Mammary epithelial cell (primary cell): ENCODE measurements at regions of chr10 and their contacts with region 1.

Region 1: DNA sequence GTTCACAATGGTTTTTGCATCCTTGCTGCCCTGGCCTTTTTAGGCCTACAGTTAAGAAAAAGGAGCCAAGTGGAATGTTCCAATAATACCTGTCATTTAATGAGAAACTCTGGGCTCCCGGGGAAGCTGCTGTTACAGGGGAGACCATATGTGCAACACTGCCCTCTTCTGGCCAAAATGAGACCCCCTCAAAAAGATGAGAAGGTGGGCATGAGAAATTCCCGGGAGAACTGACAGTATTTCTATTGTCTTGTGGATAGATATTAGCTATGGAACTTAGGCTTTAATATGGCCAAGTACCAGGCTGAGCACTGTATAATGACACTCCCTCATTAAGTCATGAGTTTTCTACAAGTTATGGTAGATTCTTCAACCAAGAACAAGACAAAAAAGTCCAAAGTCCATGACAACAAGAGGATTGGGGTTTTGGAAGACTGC is 99.4 kb downstream of the CCDC3 start:
- DNase-seq: peak; percentile 41
- H3K4me3 ChIP-seq: no peak overlapping the region
- H3K27ac ChIP-seq: no peak overlapping the region
- H3K4me1 ChIP-seq: no peaks in the 10 kb centered on the region
- H3K27me3 ChIP-seq: peaks cover 1% of the 10 kb centered on the region
- CTCF ChIP-seq: peak; percentile 57 to 73

Region 2: DNA sequence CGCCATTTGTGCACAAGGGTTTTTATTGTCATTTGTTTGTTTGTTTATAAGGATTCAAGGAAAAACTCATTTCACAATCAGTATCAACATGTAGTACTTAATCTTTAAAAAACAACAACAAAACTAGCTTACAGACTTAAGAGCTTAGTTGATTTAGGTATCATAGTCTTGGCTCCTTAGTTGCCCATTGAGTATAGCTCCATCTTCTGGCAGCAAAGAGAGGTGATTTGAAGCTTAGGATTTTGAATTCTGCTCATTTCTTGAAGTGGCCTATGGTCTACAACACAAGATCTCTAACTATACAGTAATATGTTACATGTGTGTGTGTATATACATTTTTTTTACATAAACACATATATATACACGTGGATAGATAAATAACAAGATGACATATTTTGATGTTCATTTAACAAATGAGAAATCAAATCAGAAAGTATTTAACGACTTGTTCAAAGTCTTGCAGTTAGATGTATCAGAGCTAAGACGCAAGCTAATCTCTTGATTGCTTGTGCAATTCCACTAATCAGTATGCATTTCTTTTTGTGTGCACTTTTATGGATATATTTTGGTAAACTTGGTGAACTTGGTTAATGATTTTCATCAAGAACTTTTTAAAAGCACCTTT is 245.5 kb before region 1 on chr10:
- CTCF ChIA-PET with region 1: interaction called, 6 read pairs
- dilution Hi-C with region 1: no loop called
- in situ Hi-C with region 1: no loop called
- intact Hi-C with region 1: loop called (anchors 5 kb)
- DNase-seq: peak; percentile 39
- H3K4me3 ChIP-seq: no peak overlapping the region
- H3K27ac ChIP-seq: no peak overlapping the region
- H3K4me1 ChIP-seq: no peaks in the 10 kb centered on the region
- H3K27me3 ChIP-seq: no peaks in the 10 kb centered on the region
- CTCF ChIP-seq: peak; percentile 69 to 81

Region 3: DNA sequence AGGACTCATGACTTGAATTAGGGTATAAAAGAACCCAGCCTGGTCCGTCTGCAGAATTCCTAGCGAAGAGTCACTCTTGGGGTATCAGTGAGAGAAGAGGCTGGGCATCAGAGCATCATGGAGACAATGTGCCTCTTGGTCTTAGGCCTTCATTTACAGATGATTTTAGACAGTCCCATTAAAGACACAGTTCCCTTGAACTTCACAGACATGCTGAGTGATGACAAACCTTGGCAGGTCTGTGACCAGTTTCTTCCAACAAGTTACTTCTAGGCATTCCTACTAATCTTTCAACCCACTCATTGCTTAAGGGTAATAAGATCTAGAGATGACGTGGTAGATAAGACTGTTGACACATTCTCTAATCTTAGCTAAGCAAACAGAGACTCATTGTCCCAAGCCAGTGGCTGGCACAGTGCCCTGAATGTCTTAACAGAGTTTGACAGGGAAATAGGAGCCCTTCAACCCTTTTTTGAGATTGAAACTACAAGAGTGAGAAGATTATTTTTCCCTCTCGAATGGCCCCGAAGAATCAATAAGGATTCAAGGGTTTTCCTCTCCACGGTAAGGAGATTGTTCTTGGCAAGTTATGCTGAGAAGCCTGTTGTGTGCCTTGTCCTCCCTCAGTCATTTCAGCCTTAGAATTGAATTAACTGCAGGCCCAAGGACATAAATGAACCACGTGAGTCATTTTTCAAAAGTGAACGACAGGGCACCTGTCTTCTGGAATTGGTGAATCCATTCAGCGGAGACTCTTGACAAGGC is 181.8 kb before region 1 on chr10:
- CTCF ChIA-PET with region 1: no interaction called
- dilution Hi-C with region 1: no loop called
- in situ Hi-C with region 1: no loop called
- intact Hi-C with region 1: loop called (anchors 1 kb)
- DNase-seq: peak; percentile 97
- H3K4me3 ChIP-seq: no peak overlapping the region
- H3K27ac ChIP-seq: peak overlapping the region; percentile 36
- H3K4me1 ChIP-seq: peaks cover 40% of the 10 kb centered on the region
- H3K27me3 ChIP-seq: no peaks in the 10 kb centered on the region
- CTCF ChIP-seq: no peak

Region 4: DNA sequence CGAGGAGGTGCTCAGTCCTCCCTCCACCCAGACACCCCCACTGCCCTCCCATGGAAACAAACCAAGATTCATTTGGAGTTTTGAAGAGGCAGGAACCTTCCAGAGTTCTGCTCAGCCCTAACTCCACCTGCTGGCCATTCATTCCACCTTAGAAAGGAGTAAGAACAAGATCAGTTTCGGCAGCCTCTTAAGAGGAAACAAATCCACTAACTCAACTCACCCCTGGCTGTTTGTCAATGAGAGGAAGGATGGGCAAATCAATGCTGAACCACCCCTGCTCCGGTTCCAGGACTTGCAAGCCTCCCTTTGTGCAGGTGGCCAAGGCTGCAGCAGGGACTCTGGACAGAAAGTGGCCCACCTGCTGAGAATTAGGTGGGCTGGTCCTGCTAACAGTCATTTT is 73.1 kb after region 1 on chr10:
- CTCF ChIA-PET with region 1: no interaction called
- dilution Hi-C with region 1: no loop called
- in situ Hi-C with region 1: no loop called
- intact Hi-C with region 1: loop called (anchors 1 kb)
- DNase-seq: peak; percentile 15
- H3K4me3 ChIP-seq: no peak overlapping the region
- H3K27ac ChIP-seq: no peak overlapping the region
- H3K4me1 ChIP-seq: peaks cover 5% of the 10 kb centered on the region
- H3K27me3 ChIP-seq: no peaks in the 10 kb centered on the region
- CTCF ChIP-seq: peak; percentile 23 to 54

Region 5: GRCh38 chr10:13074561-13075451 is 172.7 kb after region 1 on chr10:
- CTCF ChIA-PET with region 1: interaction called, 5 read pairs
- dilution Hi-C with region 1: no loop called
- in situ Hi-C with region 1: no loop called
- intact Hi-C with region 1: loop called (anchors 1 kb)
- DNase-seq: peak; percentile 58
- H3K4me3 ChIP-seq: no peak overlapping the region
- H3K27ac ChIP-seq: no peak overlapping the region
- H3K4me1 ChIP-seq: peaks cover 10% of the 10 kb centered on the region
- H3K27me3 ChIP-seq: no peaks in the 10 kb centered on the region
- CTCF ChIP-seq: peak; percentile 68 to 95